Breast epithelium (tissue), 4 donors: ENCODE measurements at regions of chr9 and their contacts with region 1.

Region 1: DNA sequence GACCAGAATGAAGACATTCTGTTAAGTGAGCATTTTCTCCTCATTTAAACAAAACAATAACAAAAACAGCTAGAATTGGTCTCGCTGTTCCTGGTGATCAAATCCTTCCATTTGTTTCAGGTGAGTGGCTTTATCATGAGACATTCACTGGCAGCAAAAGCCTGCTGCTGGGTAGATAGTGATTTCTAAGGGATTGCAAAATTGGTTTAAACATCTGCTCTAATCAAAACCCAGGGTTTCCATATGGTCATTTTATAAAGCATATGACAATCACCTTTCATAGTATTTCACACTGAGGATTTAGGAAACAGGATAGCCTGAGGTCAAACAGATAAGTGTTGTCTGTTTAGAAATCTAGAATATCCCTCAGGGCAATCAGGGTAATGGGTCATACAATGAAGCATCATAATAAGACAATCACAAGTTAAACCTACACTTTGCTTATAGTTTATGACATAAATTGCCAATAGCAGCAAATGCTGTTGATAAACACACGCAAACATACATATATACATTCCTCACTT is 769.6 kb upstream of the C9orf72 start:
- DNase-seq: no peak
- H3K4me3 ChIP-seq: no peak overlapping the region
- H3K27ac ChIP-seq: no peak overlapping the region
- H3K4me1 ChIP-seq: no peaks in the 10 kb centered on the region
- H3K27me3 ChIP-seq: no peaks in the 10 kb centered on the region
- CTCF ChIP-seq: no peak
- POLR2A ChIP-seq: no peak

Region 2: DNA sequence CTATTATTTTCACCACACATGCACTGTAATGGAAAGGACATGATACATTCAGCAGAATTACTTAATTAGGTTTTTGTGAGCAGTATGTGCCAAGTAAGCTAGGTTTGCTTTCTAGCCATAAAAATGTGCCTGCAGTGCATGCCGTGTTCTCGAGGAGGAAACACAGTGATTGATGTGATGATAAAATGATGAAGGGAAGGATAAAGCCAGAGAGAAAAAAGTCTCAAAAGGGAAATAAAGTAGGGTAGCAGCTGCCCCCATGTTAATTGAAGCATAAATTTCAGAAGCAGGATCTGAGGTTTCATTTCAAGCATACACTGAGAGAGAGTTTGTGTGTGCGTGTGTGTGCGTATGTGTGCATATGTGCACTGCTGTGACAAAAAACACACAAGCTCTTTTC is 55.4 kb before region 1 on chr9:
- intact Hi-C with region 1: no loop called
- DNase-seq: no peak
- H3K4me3 ChIP-seq: no peak overlapping the region
- H3K27ac ChIP-seq: no peak overlapping the region
- H3K4me1 ChIP-seq: no peaks in the 10 kb centered on the region
- H3K27me3 ChIP-seq: no peaks in the 10 kb centered on the region
- CTCF ChIP-seq: no peak
- POLR2A ChIP-seq: no peak

Region 3: GRCh38 chr9:28899926-28900325 is 557.0 kb after region 1 on chr9:
- intact Hi-C with region 1: loop called (anchors 10 kb)
- DNase-seq: no peak
- H3K4me3 ChIP-seq: no peak overlapping the region
- H3K27ac ChIP-seq: no peak overlapping the region
- H3K4me1 ChIP-seq: no peaks in the 10 kb centered on the region
- H3K27me3 ChIP-seq: no peaks in the 10 kb centered on the region
- CTCF ChIP-seq: no peak
- POLR2A ChIP-seq: no peak

Region 4: GRCh38 chr9:29297592-29297991 is 954.7 kb after region 1 on chr9:
- intact Hi-C with region 1: no loop called
- DNase-seq: no peak
- H3K4me3 ChIP-seq: no peak overlapping the region
- H3K27ac ChIP-seq: no peak overlapping the region
- H3K4me1 ChIP-seq: no peaks in the 10 kb centered on the region
- H3K27me3 ChIP-seq: no peaks in the 10 kb centered on the region
- CTCF ChIP-seq: no peak
- POLR2A ChIP-seq: no peak